ENCODE measurements at regions of chr9 and their contacts with region 1.

Region 1: GRCh38 chr9:3732077-3733038 is 206.6 kb upstream of the RFX3 start:
- DNase-seq: peak; percentile 68
- CTCF ChIP-seq: peak; percentile 39

Region 2: DNA sequence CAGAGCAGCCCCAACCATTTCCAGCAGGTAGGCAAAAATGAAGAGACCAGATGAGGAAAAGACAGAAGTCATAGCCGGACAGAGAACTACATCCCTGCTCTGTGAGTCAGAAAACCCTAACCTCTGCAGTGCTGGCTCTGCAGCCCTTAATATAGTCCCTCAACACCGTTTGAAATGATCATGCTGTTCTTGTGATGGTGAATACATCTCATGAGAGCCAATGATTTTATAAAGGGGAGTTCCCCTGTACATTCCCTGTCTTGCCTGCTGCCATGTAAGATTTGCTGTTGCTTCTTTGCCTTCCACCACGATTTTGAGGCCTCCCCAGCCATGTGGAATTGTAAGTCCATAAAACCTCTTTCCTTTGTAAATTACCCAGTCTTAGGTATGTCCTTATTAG is 10.2 kb after region 1 on chr9:
- CTCF ChIA-PET with region 1: interaction called, 10 read pairs
- POLR2A ChIA-PET with region 1: no interaction called
- DNase-seq: no peak
- CTCF ChIP-seq: no peak

Region 3: GRCh38 chr9:3962971-3963642 is 230.7 kb after region 1 on chr9:
- CTCF ChIA-PET with region 1: no interaction called
- POLR2A ChIA-PET with region 1: no interaction called
- DNase-seq: no peak
- CTCF ChIP-seq: no peak

Region 4: GRCh38 chr9:4117835-4118610 is 385.7 kb after region 1 on chr9:
- CTCF ChIA-PET with region 1: interaction called, 28 read pairs
- POLR2A ChIA-PET with region 1: no interaction called
- DNase-seq: peak; percentile 53
- CTCF ChIP-seq: peak; percentile 81